IMR-90 (cell line): ENCODE measurements at regions of chr20 and their contacts with region 1.

Region 1: GRCh38 chr20:39835130-39835842 is 853.8 kb downstream of the MAFB start:
- DNase-seq: no peak
- ATAC-seq: no peak
- H3K4me3 ChIP-seq: no peak overlapping the region
- H3K27ac ChIP-seq: no peak overlapping the region
- H3K4me1 ChIP-seq: no peaks in the 10 kb centered on the region
- H3K27me3 ChIP-seq: peaks cover 8% of the 10 kb centered on the region
- CTCF ChIP-seq: no peak
- POLR2A ChIP-seq: no peak
- RAD21 ChIP-seq: no peak

Region 2: DNA sequence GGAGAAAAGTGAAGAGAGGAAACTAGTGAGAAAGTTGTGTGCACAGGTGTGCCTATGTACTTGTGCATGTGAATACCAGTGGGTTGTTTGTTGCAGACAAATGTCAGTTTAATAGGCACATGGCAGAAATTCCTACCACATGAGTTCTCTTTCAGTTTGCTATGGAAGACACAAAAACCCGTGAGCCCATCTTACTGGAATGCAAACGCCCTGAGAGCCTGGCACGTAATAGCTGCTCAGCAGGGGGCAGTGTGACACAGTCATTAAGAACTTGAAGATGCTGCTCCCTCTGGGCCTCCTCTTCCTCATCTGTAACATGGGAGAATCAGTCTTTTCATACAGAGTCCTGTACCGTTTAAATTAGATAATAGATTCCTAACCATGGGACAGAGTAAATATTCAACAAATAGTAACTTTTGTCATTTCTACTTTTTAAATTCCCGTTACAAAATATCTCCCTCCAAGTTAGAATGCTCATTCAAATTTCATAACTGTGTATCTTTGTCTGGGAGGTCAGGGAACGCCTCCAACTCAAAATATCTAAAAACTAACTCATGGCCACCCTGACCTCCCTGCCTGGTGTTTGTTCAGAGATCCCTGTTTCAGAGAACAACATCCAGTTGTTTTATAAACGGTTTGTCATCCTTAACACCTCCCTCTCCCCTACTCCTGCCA is 50.8 kb after region 1 on chr20:
- CTCF ChIA-PET with region 1: no interaction called
- POLR2A ChIA-PET with region 1: no interaction called
- dilution Hi-C with region 1: no loop called
- in situ Hi-C with region 1: no loop called
- intact Hi-C with region 1: loop called (anchors 1 kb)
- DNase-seq: peak; percentile 88
- ATAC-seq: peak; percentile 90
- H3K4me3 ChIP-seq: no peak overlapping the region
- H3K27ac ChIP-seq: no peak overlapping the region
- H3K4me1 ChIP-seq: peaks cover 2% of the 10 kb centered on the region; the same call in 1 of the 2 replicates
- H3K27me3 ChIP-seq: peaks cover 1% of the 10 kb centered on the region; the same call in 1 of the 2 replicates
- CTCF ChIP-seq: peak; percentile 64
- POLR2A ChIP-seq: no peak
- RAD21 ChIP-seq: peak; percentile 68